Activated CD4-positive, alpha-beta T cell treated with anti-CD3 and anti-CD28 coated beads for 36 hours (primary cell): ENCODE measurements at regions of chr14 and their contacts with region 1.

Region 1: GRCh38 chr14:101809671-101810514 is 48.4 kb downstream of the PPP2R5C start:
- DNase-seq: peak; percentile 90
- ATAC-seq: peak; percentile 86
- H3K4me3 Mint-ChIP-seq: peak overlapping the region; percentile 97
- H3K27ac Mint-ChIP-seq: peak overlapping the region; percentile 99
- H3K4me1 Mint-ChIP-seq: peaks cover 49% of the 10 kb centered on the region
- H3K27me3 Mint-ChIP-seq: no peaks in the 10 kb centered on the region

Region 2: DNA sequence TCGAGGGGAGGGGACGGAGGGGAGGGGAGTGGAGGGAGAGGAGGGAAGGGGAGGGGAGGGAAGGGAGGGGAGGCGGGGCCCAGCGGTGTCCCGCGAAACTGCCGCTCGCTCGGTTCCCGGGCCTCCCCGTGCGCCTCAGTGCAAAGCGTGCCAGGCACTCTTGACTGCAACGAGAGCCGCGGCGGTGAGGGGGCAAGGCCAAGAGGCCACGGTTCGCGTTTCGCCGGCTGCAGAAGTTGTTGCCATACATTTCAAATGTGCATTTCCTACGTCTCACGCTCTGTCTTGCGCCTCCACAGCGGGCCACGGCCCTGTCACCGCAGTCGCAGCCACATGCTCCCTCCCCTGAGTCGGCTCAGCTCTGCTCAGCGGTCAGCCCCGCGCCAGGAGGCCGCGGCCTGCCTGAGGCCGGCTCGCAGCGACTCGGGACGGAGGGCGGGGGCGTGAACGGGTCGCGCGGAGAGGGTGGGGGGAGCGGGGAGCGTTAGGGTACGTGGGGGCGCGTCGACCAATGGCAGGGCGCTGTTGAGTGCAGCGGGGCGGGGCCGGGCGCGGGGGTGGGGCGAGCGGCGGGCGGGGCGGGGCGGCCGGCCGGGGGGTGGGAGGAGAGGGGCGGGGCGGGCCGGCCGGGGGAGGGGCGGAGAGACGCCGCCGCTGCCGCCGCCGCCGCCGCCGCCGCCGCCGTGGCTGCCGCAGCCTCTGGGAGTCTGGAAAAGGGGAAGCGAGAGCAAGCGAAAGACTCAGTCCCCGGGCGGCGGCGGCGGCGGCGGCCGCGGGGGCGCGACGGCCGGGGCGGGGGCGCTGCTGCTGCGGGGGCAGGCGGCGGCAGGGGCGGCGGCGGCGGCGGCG is 48.6 kb before region 1 on chr14 and contains the start of gene PPP2R5C:
- CTCF ChIA-PET with region 1: interaction called, 3 read pairs
- POLR2A ChIA-PET with region 1: interaction called, 7 read pairs
- intact Hi-C with region 1: loop called in 1 of 2 experiments (anchors 1 kb)
- DNase-seq: peak; percentile 94
- ATAC-seq: peak; percentile 65
- H3K4me3 Mint-ChIP-seq: peak within 1 kb of the TSS; percentile 85
- H3K27ac Mint-ChIP-seq: peak within 1 kb of the TSS; percentile 78
- H3K4me1 Mint-ChIP-seq: peaks cover 43% of the 10 kb centered on the region
- H3K27me3 Mint-ChIP-seq: no peaks in the 10 kb centered on the region
- total RNA-seq, gene PPP2R5C: 232 to 281 TPM

Region 3: GRCh38 chr14:101774006-101774795 is 35.7 kb before region 1 on chr14:
- CTCF ChIA-PET with region 1: interaction called, 24 read pairs
- POLR2A ChIA-PET with region 1: interaction called, 7 read pairs
- intact Hi-C with region 1: no loop called
- DNase-seq: no peak
- ATAC-seq: no peak
- H3K4me3 Mint-ChIP-seq: no peak overlapping the region
- H3K27ac Mint-ChIP-seq: no peak overlapping the region
- H3K4me1 Mint-ChIP-seq: peaks cover 14% of the 10 kb centered on the region
- H3K27me3 Mint-ChIP-seq: peaks cover 1% of the 10 kb centered on the region

Region 4: DNA sequence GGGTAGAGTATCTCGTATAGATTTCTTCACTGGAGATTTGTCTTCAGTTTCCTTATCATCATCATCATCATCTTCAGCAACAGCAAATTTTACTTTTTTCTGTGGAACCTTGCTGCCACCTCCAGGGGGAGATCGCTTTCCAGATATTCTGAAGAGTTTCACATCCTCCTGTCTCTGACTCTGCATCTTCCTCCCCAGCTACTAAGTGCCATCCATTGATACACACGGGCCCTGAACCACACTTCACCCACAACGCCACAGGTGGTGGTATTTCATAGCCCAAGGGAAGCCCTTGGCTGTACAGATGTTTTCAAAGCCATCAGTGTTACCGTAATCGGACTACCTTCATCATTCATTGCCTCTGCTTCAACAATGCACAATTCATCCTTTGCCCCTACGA is 33.8 kb after region 1 on chr14:
- CTCF ChIA-PET with region 1: interaction called, 4 read pairs
- POLR2A ChIA-PET with region 1: interaction called, 11 read pairs
- intact Hi-C with region 1: no loop called
- DNase-seq: peak; percentile 78
- ATAC-seq: peak; percentile 66
- H3K4me3 Mint-ChIP-seq: no peak overlapping the region
- H3K27ac Mint-ChIP-seq: peak overlapping the region; percentile 82
- H3K4me1 Mint-ChIP-seq: peaks cover 87% of the 10 kb centered on the region
- H3K27me3 Mint-ChIP-seq: no peaks in the 10 kb centered on the region